ENCODE measurements at regions of chr5 and their contacts with region 1.

Region 1: DNA sequence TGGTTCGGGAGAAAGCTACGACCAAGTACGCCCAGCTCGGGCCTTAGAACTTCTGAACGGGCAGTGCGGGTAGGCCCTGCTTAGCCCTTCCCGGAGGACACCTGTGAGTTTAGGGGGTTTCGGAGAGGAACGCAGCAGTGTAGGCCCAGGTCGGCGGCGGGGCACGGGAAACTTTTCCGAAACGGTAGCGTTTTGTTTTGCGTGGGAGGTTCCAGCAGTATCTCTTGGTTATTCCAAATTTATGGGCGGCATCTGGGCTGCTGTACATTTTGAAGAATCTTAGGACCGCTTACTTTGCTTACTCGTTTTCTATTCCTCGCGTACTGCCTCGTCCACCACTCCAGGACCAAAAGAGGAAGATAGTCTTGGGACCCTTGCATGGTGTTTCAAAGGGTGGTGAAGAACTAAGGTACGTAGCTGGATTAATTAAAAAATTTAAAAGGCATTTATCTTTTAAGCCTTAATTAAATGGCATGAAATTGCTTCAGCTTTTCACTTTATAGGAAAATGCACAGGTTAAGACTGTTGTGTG is 492 bp downstream of the TENT2 start:
- DNase-seq: no peak
- ATAC-seq: no peak; the same call in 1 of the 2 replicates
- H3K4me3 ChIP-seq: peak overlapping the region; percentile 75
- H3K27ac ChIP-seq: peak overlapping the region; percentile 89
- H3K4me1 ChIP-seq: no peaks in the 10 kb centered on the region
- H3K27me3 ChIP-seq: no peaks in the 10 kb centered on the region
- CTCF ChIP-seq: no peak
- POLR2A ChIP-seq: 0 out of 2 replicates have a peak, but pooled peaks have one; percentile 15
- RAD21 ChIP-seq: no peak

Region 2: GRCh38 chr5:79560771-79561524 is 51.8 kb before region 1 on chr5:
- CTCF ChIA-PET with region 1: no interaction called
- POLR2A ChIA-PET with region 1: no interaction called
- dilution Hi-C with region 1: no loop called
- in situ Hi-C with region 1: no loop called
- intact Hi-C with region 1: loop called (anchors 2 kb)
- DNase-seq: peak; percentile 67
- ATAC-seq: peak; percentile 66
- H3K4me3 ChIP-seq: no peak overlapping the region
- H3K27ac ChIP-seq: peak overlapping the region; percentile 49; the same call in 1 of the 2 replicates
- H3K4me1 ChIP-seq: peaks cover 4% of the 10 kb centered on the region
- H3K27me3 ChIP-seq: no peaks in the 10 kb centered on the region
- CTCF ChIP-seq: no peak
- POLR2A ChIP-seq: no peak
- RAD21 ChIP-seq: no peak

Measured in IMR-90 (cell line).